T-cell (primary cell): ENCODE measurements at regions of chr9 and their contacts with region 1.

Region 1: GRCh38 chr9:131334629-131335367 is 45.3 kb downstream of the PLPP7 start:
- DNase-seq: no peak
- ATAC-seq: no peak
- H3K4me3 ChIP-seq: no peak overlapping the region
- H3K4me3 Mint-ChIP-seq: no peak overlapping the region
- H3K27ac ChIP-seq: no peak overlapping the region
- H3K27ac Mint-ChIP-seq: no peak overlapping the region
- H3K4me1 ChIP-seq: peaks cover 0 to 5% of the 10 kb centered on the region in 2 experiments
- H3K4me1 Mint-ChIP-seq: peaks cover 4 to 10% (median 4%) of the 10 kb centered on the region in 3 donors
- H3K27me3 ChIP-seq: no peaks in the 10 kb centered on the region
- H3K27me3 Mint-ChIP-seq: no peaks in the 10 kb centered on the region

Region 2: GRCh38 chr9:131178382-131178781 is 156.4 kb before region 1 on chr9:
- CTCF ChIA-PET with region 1: interaction called, 49 to 62 read pairs
- POLR2A ChIA-PET with region 1: interaction called in 1 of 2 experiments, 3 read pairs
- DNase-seq: peak; percentile 48 to 83 (median 71)
- ATAC-seq: peak; percentile 97 to 98 (median 98)
- H3K4me3 ChIP-seq: no peak overlapping the region
- H3K4me3 Mint-ChIP-seq: no peak overlapping the region
- H3K27ac ChIP-seq: no peak overlapping the region
- H3K27ac Mint-ChIP-seq: peak overlapping the region in 1 of 2 donors; percentile 48
- H3K4me1 ChIP-seq: peaks cover 0 to 5% of the 10 kb centered on the region in 2 experiments
- H3K4me1 Mint-ChIP-seq: peaks cover 15 to 24% (median 15%) of the 10 kb centered on the region in 3 donors
- H3K27me3 ChIP-seq: no peaks in the 10 kb centered on the region
- H3K27me3 Mint-ChIP-seq: no peaks in the 10 kb centered on the region